ENCODE measurements at regions of chr14 and their contacts with region 1.

Region 1: GRCh38 chr14:24861083-24861630 is 188.8 kb downstream of the STXBP6 start:
- DNase-seq: no peak
- ATAC-seq: peak; percentile 77
- H3K4me3 ChIP-seq: no peak overlapping the region
- H3K27ac ChIP-seq: no peak overlapping the region
- H3K4me1 ChIP-seq: no peaks in the 10 kb centered on the region
- H3K27me3 ChIP-seq: no peaks in the 10 kb centered on the region
- CTCF ChIP-seq: no peak
- EP300 ChIP-seq: no peak
- POLR2A ChIP-seq: no peak
- RAD21 ChIP-seq: no peak

Region 2: GRCh38 chr14:24843494-24843893 is 17.7 kb before region 1 on chr14:
- CTCF ChIA-PET with region 1: interaction called, 3 read pairs
- POLR2A ChIA-PET with region 1: interaction called, 3 read pairs
- RAD21 ChIA-PET with region 1: interaction called, 4 read pairs
- SMC1A ChIA-PET with region 1: interaction called, 24 read pairs
- in situ Hi-C with region 1: no loop called
- intact Hi-C with region 1: no loop called
- DNase-seq: peak; percentile 13
- ATAC-seq: peak; percentile 97
- H3K4me3 ChIP-seq: no peak overlapping the region
- H3K27ac ChIP-seq: no peak overlapping the region
- H3K4me1 ChIP-seq: no peaks in the 10 kb centered on the region
- H3K27me3 ChIP-seq: no peaks in the 10 kb centered on the region
- CTCF ChIP-seq: no peak
- EP300 ChIP-seq: peak; percentile 10 to 50; a peak in 2 of 4 replicates
- POLR2A ChIP-seq: no peak
- RAD21 ChIP-seq: no peak

Region 3: GRCh38 chr14:24875991-24876878 is 15.1 kb after region 1 on chr14:
- CTCF ChIA-PET with region 1: interaction called, 4 read pairs
- POLR2A ChIA-PET with region 1: interaction called, 4 read pairs
- RAD21 ChIA-PET with region 1: interaction called, 3 read pairs
- SMC1A ChIA-PET with region 1: interaction called, 12 read pairs
- in situ Hi-C with region 1: no loop called
- intact Hi-C with region 1: no loop called
- DNase-seq: no peak
- ATAC-seq: peak; percentile 38
- H3K4me3 ChIP-seq: no peak overlapping the region
- H3K27ac ChIP-seq: no peak overlapping the region
- H3K4me1 ChIP-seq: no peaks in the 10 kb centered on the region
- H3K27me3 ChIP-seq: no peaks in the 10 kb centered on the region
- CTCF ChIP-seq: no peak
- EP300 ChIP-seq: no peak
- POLR2A ChIP-seq: no peak
- RAD21 ChIP-seq: no peak

Measured in GM12878 (cell line).